Endothelial cell of umbilical vein (primary cell): ENCODE measurements at regions of chr2 and their contacts with region 1.

Region 1: DNA sequence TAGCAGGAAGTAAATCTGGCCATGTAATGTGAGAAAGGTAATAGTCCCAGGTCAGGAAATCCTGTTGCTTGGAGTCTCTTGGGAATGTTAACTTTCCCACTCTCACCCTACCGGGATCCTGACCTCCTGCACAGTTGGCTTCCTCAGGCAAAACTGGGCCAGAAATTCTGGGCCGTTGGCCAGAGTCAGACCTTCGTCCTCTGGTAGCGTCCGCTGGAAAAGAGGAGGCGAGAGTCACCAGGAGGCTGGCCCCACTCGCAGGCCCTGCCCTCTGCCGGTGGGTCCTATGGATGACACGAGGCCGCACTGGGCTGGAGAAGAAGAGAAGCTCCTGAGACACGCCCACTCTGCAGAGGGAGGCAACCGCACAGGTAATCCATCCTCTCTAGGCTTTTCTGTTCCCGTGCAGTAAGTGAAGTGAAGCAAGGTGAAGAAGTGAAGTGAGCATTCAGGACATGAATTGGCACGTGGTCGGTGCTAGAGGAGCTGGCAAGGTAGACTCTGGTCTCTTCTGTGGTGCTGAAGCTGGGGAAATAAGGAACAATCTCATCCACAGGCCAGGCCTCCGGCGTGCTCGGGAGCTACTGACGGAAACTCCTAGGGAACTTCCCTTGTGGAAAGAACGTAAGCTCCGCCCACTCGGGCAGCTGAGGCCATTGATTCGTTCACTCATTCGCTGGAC is 182.7 kb upstream of the GLI2 start:
- DNase-seq: peak; percentile 97
- H3K4me3 ChIP-seq: no peak overlapping the region
- H3K27ac ChIP-seq: no peak overlapping the region
- H3K4me1 ChIP-seq: peaks cover 13% of the 10 kb centered on the region
- H3K27me3 ChIP-seq: peaks cover 15% of the 10 kb centered on the region in 2 experiments
- CTCF ChIP-seq: peak; percentile 71 to 85
- POLR2A ChIP-seq: no peak

Region 2: DNA sequence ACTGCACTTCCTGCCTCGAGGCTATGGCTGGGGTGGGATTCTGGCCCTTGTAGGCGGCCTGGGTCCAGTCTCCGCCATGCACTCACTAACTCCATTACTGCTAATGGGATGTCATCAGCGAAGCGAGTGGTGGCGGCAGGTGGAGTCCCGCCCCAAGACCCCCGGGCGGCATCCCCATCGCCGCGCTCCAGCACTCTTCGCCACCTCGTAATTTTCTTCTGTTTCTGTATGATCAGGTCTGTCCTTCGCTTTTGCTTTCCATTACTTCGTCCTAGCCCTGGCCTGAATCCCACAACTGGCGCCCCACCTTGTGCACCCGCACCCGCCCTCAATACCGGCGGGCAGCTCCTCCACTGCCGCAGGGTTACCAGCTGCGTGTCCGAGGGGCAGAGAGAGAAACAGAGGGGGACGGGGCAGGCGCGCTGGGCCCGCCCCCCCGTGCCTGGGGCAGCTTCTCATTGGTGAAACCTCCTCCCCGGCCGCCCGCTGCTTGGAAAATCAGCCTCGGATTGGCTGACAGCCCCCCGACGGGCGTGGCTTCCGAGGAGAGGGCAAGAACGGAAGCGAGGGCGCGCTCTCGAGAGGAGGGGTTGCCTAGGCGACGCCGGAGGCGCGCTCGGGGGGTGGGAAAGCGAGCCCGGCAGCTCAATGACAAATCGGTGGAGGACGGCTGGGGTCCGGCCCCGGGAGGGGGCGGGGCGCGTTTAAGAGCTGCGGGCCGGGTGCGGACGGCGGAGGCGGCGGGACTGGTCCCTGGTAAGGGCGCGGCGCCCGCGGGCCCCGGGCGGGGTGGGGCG is 300.5 kb before region 1 on chr2 and contains the start of gene RALB:
- CTCF ChIA-PET with region 1: no interaction called
- POLR2A ChIA-PET with region 1: no interaction called
- dilution Hi-C with region 1: no loop called
- intact Hi-C with region 1: loop called (anchors 10 kb)
- DNase-seq: peak; percentile 100
- H3K4me3 ChIP-seq: peak within 1 kb of the TSS; percentile 47 to 83 (median 67)
- H3K27ac ChIP-seq: peak within 1 kb of the TSS; percentile 58
- H3K4me1 ChIP-seq: peaks cover 49% of the 10 kb centered on the region
- H3K27me3 ChIP-seq: no peaks in the 10 kb centered on the region
- CTCF ChIP-seq: no peak
- POLR2A ChIP-seq: peak; percentile 70
- total RNA-seq, gene RALB: 106 and 115 TPM in 2 replicates

Region 3: DNA sequence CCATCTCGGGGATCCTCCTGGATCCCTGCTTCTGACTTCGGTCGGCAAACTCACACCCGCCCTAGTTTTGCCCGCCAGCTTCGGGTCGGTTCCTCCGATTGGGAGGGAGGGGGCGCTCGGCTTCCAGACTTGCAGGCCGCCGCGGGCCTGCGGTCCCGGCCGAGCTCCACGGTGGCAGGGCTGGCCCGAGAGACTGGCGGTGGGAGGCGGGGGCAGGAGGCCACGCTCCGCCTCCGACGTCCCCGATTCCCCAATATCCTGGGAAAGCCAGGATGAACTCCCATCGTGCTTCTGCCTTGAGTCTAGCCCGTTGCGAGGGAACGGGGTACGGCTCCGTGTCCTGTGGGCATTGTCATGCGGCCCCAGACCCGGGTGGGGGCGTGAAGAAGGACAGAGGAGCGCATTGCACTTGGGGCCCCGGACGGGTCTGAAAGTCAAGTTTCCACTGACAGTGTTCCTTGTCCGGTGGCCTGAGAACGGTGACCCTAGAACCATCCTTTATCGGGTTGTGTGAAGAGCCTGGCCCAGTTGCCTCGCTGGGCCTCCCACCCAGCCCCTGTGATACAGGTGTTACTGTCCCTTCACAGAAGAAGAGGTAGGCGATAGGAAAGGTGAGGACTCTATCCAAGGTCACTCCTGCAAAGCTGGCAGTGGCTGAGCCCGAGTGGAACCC is 209.4 kb before region 1 on chr2:
- CTCF ChIA-PET with region 1: interaction called, 63 read pairs
- POLR2A ChIA-PET with region 1: no interaction called
- dilution Hi-C with region 1: no loop called
- intact Hi-C with region 1: loop called (anchors 1 kb)
- DNase-seq: peak; percentile 66
- H3K4me3 ChIP-seq: no peak overlapping the region
- H3K27ac ChIP-seq: no peak overlapping the region
- H3K4me1 ChIP-seq: no peaks in the 10 kb centered on the region
- H3K27me3 ChIP-seq: peaks cover 47 to 67% of the 10 kb centered on the region in 2 experiments
- CTCF ChIP-seq: peak; percentile 79 to 89
- POLR2A ChIP-seq: no peak

Region 4: GRCh38 chr2:120486441-120487378 is 66.2 kb before region 1 on chr2:
- CTCF ChIA-PET with region 1: no interaction called
- POLR2A ChIA-PET with region 1: no interaction called
- dilution Hi-C with region 1: no loop called
- intact Hi-C with region 1: no loop called
- DNase-seq: no peak
- H3K4me3 ChIP-seq: no peak overlapping the region
- H3K27ac ChIP-seq: no peak overlapping the region
- H3K4me1 ChIP-seq: no peaks in the 10 kb centered on the region
- H3K27me3 ChIP-seq: peaks cover 0 to 4% of the 10 kb centered on the region in 2 experiments
- CTCF ChIP-seq: no peak
- POLR2A ChIP-seq: no peak

Region 5: DNA sequence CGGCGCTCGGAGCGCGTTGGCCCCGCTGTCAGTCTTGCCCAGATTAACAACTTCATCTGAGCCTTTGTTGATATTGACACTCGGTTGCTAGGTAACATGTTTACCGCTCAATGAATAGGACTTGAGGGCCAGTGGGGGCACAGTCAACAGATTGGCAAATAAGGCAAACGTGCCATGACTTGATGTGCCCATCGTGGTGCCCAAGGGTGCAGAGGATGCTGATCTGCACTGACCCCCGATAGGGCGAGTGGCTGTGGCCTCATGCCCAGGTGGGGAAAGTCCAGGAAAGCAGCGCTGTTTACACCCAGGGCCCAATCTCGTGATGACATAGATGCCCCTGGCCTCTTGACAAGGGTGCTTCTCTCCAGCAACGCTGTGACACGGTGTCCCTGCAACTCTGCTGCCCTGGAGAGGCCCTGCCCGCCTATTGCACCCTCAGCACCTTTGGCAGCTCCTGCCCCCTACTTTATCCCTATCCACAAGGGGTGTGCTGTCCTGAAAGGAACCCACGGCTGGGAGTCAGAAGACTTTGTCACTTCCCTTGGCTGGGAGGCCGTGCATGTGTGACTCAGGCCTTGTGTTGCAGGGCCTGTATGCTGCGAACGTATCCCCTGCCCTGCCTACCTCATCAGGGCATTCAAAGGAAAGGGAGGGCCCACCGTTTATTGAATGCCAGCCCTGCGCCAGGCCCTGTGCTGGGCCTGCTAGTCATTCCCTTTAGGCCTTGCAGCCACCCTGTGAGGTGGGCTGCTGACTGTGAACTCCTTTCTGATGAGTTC is 49.0 kb before region 1 on chr2:
- CTCF ChIA-PET with region 1: interaction called, 30 read pairs
- POLR2A ChIA-PET with region 1: no interaction called
- dilution Hi-C with region 1: no loop called
- intact Hi-C with region 1: loop called (anchors 1 kb)
- DNase-seq: peak; percentile 29
- H3K4me3 ChIP-seq: no peak overlapping the region
- H3K27ac ChIP-seq: no peak overlapping the region
- H3K4me1 ChIP-seq: peaks cover 8% of the 10 kb centered on the region
- H3K27me3 ChIP-seq: peaks cover 13 to 38% of the 10 kb centered on the region in 2 experiments
- CTCF ChIP-seq: no peak
- POLR2A ChIP-seq: no peak

Region 6: DNA sequence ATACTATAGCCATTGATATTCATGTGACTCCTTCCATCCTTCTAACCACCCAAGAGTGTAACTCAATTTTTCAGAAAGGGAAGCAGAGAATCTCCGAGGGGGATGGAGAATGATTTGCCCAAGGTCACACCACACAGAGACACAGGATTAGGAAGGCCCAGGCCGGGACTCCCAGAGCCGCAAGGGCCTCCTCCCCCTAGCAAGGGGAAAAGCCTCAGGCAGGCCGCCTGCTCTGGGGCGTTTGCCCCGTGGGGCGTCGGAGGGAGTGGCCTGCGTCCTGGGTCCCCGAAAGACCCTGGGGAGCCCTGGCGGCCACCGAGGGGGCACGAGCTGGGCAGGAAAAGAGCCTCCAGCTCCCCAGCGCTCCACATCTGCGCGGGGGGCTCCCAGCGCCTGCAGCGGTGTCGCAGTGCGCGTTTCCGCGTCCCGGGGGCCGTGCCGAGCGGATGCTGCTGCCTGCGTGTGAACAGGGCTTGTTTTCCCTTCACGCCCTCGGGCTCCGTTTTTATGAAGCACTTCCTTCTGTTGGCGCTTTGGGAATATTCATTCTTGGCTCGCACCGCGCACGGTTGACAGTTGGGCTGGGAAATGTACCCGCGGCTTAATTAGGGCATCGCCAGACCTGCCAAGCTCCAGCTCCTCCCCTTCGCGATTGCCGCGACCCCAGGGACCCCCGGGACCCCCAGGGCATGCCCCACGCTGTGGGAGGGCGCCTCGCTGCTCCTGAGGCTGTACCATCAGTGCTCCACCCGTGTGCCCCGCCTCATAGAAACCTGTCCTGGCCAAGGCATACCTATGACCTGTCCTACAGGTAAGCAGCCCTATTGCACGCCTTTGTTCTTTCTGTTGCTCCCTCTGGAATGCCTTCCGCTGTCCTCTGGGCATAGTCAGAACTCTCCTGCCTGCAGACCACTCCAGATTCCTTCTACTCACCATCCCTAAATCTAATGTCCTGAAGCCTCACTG is 23.9 kb after region 1 on chr2:
- CTCF ChIA-PET with region 1: interaction called, 3 read pairs
- POLR2A ChIA-PET with region 1: no interaction called
- dilution Hi-C with region 1: no loop called
- intact Hi-C with region 1: loop called (anchors 1 kb)
- DNase-seq: peak; percentile 51
- H3K4me3 ChIP-seq: no peak overlapping the region
- H3K27ac ChIP-seq: no peak overlapping the region
- H3K4me1 ChIP-seq: no peaks in the 10 kb centered on the region
- H3K27me3 ChIP-seq: peaks cover 20 to 28% of the 10 kb centered on the region in 2 experiments
- CTCF ChIP-seq: no peak
- POLR2A ChIP-seq: no peak

Region 7: GRCh38 chr2:120589771-120590608 is 37.0 kb after region 1 on chr2:
- CTCF ChIA-PET with region 1: interaction called, 8 read pairs
- POLR2A ChIA-PET with region 1: no interaction called
- dilution Hi-C with region 1: no loop called
- intact Hi-C with region 1: loop called (anchors 1 kb)
- DNase-seq: peak; percentile 92
- H3K4me3 ChIP-seq: no peak overlapping the region
- H3K27ac ChIP-seq: peak overlapping the region; percentile 79
- H3K4me1 ChIP-seq: peaks cover 18% of the 10 kb centered on the region
- H3K27me3 ChIP-seq: peaks cover 13 to 14% of the 10 kb centered on the region in 2 experiments
- CTCF ChIP-seq: no peak
- POLR2A ChIP-seq: no peak

Region 8: DNA sequence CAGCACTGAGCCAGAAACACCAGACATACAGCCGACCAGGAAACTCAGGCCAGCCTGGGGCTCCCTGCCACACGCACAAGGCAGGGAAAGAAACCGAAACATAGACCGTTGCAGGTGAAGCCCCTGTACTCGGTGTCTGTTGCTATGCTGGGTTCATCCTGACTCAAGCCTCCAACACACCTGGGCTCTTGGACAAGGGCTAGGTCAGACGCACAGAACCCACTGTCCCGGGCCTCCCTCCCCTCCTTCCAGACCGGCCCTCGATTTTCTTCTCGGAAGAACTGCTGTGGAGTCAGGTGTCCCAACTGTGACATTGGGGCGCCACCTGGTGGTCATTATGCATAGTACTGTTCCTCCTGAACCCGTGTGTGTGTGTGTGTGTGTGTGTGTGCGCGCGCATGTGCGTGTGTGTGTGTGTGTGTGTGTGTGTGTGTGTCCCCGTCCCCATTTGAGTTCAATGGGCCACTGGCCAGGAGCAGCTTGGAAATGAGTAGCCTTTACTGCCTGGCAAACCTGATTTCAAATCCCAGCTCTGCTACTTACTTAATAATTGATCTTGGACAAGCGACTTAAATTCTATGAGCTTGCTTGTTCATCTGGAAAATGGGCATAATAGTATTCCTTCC is 127.3 kb after region 1 on chr2:
- CTCF ChIA-PET with region 1: interaction called, 6 read pairs
- POLR2A ChIA-PET with region 1: no interaction called
- dilution Hi-C with region 1: no loop called
- intact Hi-C with region 1: loop called (anchors 2 kb)
- DNase-seq: peak; percentile 76
- H3K4me3 ChIP-seq: no peak overlapping the region
- H3K27ac ChIP-seq: no peak overlapping the region
- H3K4me1 ChIP-seq: no peaks in the 10 kb centered on the region
- H3K27me3 ChIP-seq: peaks cover 10 to 12% of the 10 kb centered on the region in 2 experiments
- CTCF ChIP-seq: peak; percentile 54 to 67
- POLR2A ChIP-seq: no peak